Breast epithelium (tissue), 4 donors: ENCODE measurements at regions of chr21 and their contacts with region 1.

Region 1: GRCh38 chr21:36817732-36818450 is 119.0 kb downstream of the SIM2 start:
- DNase-seq: no peak
- H3K4me3 ChIP-seq: no peak overlapping the region
- H3K27ac ChIP-seq: no peak overlapping the region
- H3K4me1 ChIP-seq: no peaks in the 10 kb centered on the region
- H3K27me3 ChIP-seq: no peaks in the 10 kb centered on the region
- CTCF ChIP-seq: no peak
- POLR2A ChIP-seq: no peak

Region 2: GRCh38 chr21:36661511-36662309 is 156.2 kb before region 1 on chr21:
- intact Hi-C with region 1: no loop called
- DNase-seq: no peak
- H3K4me3 ChIP-seq: no peak overlapping the region
- H3K27ac ChIP-seq: no peak overlapping the region
- H3K4me1 ChIP-seq: no peaks in the 10 kb centered on the region
- H3K27me3 ChIP-seq: peaks cover 0 to 42% of the 10 kb centered on the region in 2 donors
- CTCF ChIP-seq: no peak
- POLR2A ChIP-seq: no peak

Region 3: GRCh38 chr21:36754211-36754898 is 63.5 kb before region 1 on chr21:
- intact Hi-C with region 1: loop called (anchors 2 kb)
- DNase-seq: no peak
- H3K4me3 ChIP-seq: no peak overlapping the region
- H3K27ac ChIP-seq: no peak overlapping the region
- H3K4me1 ChIP-seq: no peaks in the 10 kb centered on the region
- H3K27me3 ChIP-seq: no peaks in the 10 kb centered on the region
- CTCF ChIP-seq: no peak
- POLR2A ChIP-seq: no peak